Caco-2 (cell line): ENCODE measurements at regions of chr16 and their contacts with region 1.

Region 1: GRCh38 chr16:69917739-69918138 is 33.4 kb upstream of the CLEC18A start:
- DNase-seq: peak; percentile 90 to 92
- H3K4me3 ChIP-seq: peak overlapping the region; percentile 18
- H3K4me3 Mint-ChIP-seq: peak overlapping the region; percentile 74
- H3K27ac Mint-ChIP-seq: peak overlapping the region; percentile 95
- H3K4me1 ChIP-seq: peaks cover 14% of the 10 kb centered on the region
- H3K4me1 Mint-ChIP-seq: peaks cover 24% of the 10 kb centered on the region
- H3K27me3 ChIP-seq: no peaks in the 10 kb centered on the region
- H3K27me3 Mint-ChIP-seq: no peaks in the 10 kb centered on the region
- CTCF ChIP-seq: peak in 1 of 2 experiments; percentile 11

Region 2: DNA sequence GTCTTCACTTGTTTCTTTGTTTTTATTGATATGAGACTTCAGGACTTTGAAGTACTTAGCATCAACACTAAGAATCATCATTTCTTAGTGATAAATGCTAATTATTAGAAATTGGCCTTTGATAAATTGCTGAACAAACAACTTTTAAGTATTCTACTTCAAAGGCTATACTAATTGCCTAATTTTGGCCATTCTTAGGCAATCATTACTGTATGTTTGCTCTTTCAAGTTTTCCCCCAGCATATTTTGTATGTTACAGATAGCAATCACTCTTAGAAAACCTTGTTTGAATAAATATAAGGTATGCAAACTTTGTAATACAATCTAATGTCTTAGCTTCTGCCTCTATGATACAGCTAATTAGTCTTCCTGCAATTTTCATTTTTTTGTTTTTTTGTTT is 237.4 kb before region 1 on chr16:
- CTCF ChIA-PET with region 1: no interaction called
- POLR2A ChIA-PET with region 1: no interaction called
- intact Hi-C with region 1: no loop called
- DNase-seq: no peak
- H3K4me3 ChIP-seq: no peak overlapping the region
- H3K4me3 Mint-ChIP-seq: no peak overlapping the region
- H3K27ac Mint-ChIP-seq: no peak overlapping the region
- H3K4me1 ChIP-seq: peaks cover 7% of the 10 kb centered on the region
- H3K4me1 Mint-ChIP-seq: peaks cover 8% of the 10 kb centered on the region
- H3K27me3 ChIP-seq: no peaks in the 10 kb centered on the region
- H3K27me3 Mint-ChIP-seq: no peaks in the 10 kb centered on the region
- CTCF ChIP-seq: no peak

Region 3: GRCh38 chr16:69870761-69871160 is 47.0 kb before region 1 on chr16:
- CTCF ChIA-PET with region 1: no interaction called
- POLR2A ChIA-PET with region 1: no interaction called
- intact Hi-C with region 1: loop called (anchors 5 kb)
- DNase-seq: no peak
- H3K4me3 ChIP-seq: no peak overlapping the region
- H3K4me3 Mint-ChIP-seq: no peak overlapping the region
- H3K27ac Mint-ChIP-seq: no peak overlapping the region
- H3K4me1 ChIP-seq: no peaks in the 10 kb centered on the region
- H3K4me1 Mint-ChIP-seq: no peaks in the 10 kb centered on the region
- H3K27me3 ChIP-seq: no peaks in the 10 kb centered on the region
- H3K27me3 Mint-ChIP-seq: no peaks in the 10 kb centered on the region
- CTCF ChIP-seq: no peak

Region 4: DNA sequence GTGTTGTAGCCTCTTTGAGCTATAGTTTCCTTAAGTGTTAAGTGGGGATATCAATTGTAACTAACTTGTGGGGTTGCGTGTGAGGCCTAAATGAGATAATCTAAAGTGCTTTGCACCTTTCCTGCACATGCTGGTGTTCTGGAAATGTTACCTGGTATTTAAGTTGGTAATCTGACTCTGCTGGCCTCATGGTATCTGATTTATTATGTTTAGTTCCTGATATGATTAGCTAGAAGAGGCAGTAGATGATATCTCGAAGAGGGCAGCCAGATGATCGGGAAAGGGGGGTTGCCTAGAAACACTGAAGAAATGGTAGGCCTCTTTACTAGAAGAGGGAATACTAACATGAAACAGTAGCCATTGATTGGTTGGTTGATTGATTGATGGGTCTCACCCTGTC is 32.0 kb before region 1 on chr16:
- CTCF ChIA-PET with region 1: no interaction called
- POLR2A ChIA-PET with region 1: no interaction called
- intact Hi-C with region 1: no loop called
- DNase-seq: no peak
- H3K4me3 ChIP-seq: no peak overlapping the region
- H3K4me3 Mint-ChIP-seq: no peak overlapping the region
- H3K27ac Mint-ChIP-seq: no peak overlapping the region
- H3K4me1 ChIP-seq: no peaks in the 10 kb centered on the region; the same call in 1 of the 2 replicates
- H3K4me1 Mint-ChIP-seq: no peaks in the 10 kb centered on the region
- H3K27me3 ChIP-seq: no peaks in the 10 kb centered on the region
- H3K27me3 Mint-ChIP-seq: no peaks in the 10 kb centered on the region
- CTCF ChIP-seq: no peak

Region 5: DNA sequence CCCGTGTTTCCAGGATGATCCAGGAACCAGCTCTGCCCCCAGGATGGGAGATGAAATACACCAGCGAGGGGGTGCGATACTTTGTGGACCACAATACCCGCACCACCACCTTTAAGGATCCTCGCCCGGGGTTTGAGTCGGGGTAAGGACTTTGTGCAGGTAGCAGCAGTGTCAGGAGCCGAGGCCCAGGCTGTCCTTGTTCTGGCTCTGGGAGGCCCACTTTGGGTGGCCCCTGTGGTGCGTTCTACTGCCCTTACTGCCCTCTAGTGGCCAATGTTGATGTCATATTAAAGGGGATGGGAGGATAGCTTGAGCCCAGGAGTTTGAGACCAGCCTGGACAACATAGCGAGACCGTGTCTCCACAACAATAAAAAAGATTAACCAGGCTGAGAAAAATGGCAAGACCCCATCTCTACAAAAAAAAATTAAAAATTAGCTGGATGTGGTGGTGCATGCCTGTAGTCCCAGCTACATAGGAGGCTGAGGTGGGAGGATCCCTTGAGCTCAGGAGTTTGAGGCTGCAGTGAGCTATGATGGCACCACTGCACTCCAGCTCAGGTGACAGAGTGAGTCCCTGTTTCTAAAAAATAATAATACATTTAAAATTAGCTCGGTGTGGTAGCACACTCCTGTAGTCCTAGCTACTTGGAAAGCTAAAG is 12.5 kb after region 1 on chr16:
- CTCF ChIA-PET with region 1: interaction called, 19 read pairs
- POLR2A ChIA-PET with region 1: no interaction called
- intact Hi-C with region 1: loop called (anchors 2 kb)
- DNase-seq: peak; percentile 68 to 83
- H3K4me3 ChIP-seq: no peak overlapping the region
- H3K4me3 Mint-ChIP-seq: no peak overlapping the region
- H3K27ac Mint-ChIP-seq: no peak overlapping the region
- H3K4me1 ChIP-seq: no peaks in the 10 kb centered on the region
- H3K4me1 Mint-ChIP-seq: no peaks in the 10 kb centered on the region
- H3K27me3 ChIP-seq: no peaks in the 10 kb centered on the region
- H3K27me3 Mint-ChIP-seq: no peaks in the 10 kb centered on the region
- CTCF ChIP-seq: peak; percentile 78 to 89

Region 6: GRCh38 chr16:69941251-69942098 is 23.7 kb after region 1 on chr16:
- CTCF ChIA-PET with region 1: no interaction called
- POLR2A ChIA-PET with region 1: no interaction called
- intact Hi-C with region 1: no loop called
- DNase-seq: no peak
- H3K4me3 ChIP-seq: no peak overlapping the region
- H3K4me3 Mint-ChIP-seq: no peak overlapping the region
- H3K27ac Mint-ChIP-seq: no peak overlapping the region
- H3K4me1 ChIP-seq: no peaks in the 10 kb centered on the region
- H3K4me1 Mint-ChIP-seq: no peaks in the 10 kb centered on the region
- H3K27me3 ChIP-seq: no peaks in the 10 kb centered on the region
- H3K27me3 Mint-ChIP-seq: no peaks in the 10 kb centered on the region
- CTCF ChIP-seq: no peak